H1 (cell line): ENCODE measurements at regions of chr12 and their contacts with region 1.

Region 1: DNA sequence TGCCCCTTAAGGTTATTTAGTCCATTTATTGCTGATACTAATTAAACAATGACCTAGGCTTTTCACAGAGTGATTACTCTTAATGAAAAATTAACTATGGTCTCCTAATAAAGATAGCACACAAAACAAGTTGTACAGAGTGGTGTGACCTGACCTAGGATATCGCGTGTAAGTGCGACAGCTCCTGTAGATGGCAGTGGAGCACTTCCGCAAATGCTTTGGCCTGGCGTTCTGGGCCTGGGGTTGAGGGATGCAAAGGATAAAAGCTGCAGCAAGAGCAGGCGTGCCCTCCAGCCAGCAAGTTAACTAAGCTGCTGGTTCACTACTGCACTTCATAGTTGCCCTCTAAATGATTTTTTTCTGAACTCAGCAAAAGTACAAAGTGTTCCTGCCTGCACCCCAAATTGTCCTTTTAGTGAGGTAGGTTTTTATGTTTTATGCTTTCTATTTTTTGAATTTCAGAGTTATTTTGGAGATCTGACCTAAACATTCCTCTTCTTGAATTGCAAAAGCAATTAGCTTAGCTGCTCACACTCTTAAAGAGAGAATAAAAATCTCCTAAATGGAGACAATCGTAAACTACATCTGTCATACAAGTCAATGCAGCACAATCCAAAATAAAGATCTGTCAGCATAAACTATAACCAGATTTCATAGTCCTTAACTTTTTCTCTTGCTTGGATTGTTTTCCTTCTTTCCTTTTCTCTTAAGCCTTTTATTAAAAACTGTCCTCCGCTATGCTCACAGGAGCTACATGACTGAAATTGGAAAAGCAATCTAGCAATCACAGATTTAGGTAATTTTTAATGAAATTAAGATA is 379.6 kb downstream of the LRIG3 start:
- DNase-seq: peak; percentile 75 to 78
- H3K4me3 ChIP-seq: no peak overlapping the region
- H3K27ac ChIP-seq: no peak overlapping the region
- H3K4me1 ChIP-seq: peaks cover 0 to 4% (median 1%) of the 10 kb centered on the region in 4 experiments; a peak in 3 of 7 replicates
- H3K27me3 ChIP-seq: no peaks in the 10 kb centered on the region
- CTCF ChIP-seq: peak; percentile 81 to 89 (median 86)
- EP300 ChIP-seq: no peak
- POLR2A ChIP-seq: no peak
- RAD21 ChIP-seq: peak; percentile 97

Region 2: DNA sequence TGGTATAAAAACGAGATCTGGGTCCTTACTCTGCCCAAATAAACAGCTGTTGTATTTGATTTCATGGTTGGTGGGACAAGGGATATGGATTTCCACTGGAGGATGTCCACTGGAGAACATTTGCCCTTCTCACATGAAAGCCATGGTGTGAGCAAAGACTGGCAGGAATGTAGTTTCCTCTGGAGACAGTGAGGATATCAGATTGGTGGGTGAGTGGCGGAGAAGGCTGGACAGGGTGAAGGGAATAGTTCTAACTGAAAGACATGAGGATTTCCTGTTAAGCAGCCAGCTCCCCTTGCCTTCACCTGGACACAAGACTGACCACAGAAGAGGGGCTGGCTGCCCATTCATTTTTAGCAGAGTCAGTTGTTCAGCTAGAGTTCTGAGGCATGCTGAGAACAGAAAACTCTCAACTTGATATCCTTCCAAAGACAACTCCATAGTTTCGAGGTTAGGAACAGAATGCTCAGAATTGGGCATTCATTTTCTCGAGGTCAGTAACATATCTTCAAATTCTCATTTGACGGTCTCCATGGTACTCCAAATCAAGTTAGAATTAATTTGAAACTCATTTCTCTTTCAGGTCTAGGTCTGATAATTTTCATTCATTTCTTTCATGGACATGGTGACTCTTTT is 13.9 kb after region 1 on chr12:
- CTCF ChIA-PET with region 1: interaction called, 12 read pairs
- POLR2A ChIA-PET with region 1: no interaction called
- DNase-seq: no peak
- H3K4me3 ChIP-seq: no peak overlapping the region
- H3K27ac ChIP-seq: no peak overlapping the region
- H3K4me1 ChIP-seq: no peaks in the 10 kb centered on the region
- H3K27me3 ChIP-seq: no peaks in the 10 kb centered on the region
- CTCF ChIP-seq: no peak
- EP300 ChIP-seq: no peak
- POLR2A ChIP-seq: no peak
- RAD21 ChIP-seq: no peak

Region 3: DNA sequence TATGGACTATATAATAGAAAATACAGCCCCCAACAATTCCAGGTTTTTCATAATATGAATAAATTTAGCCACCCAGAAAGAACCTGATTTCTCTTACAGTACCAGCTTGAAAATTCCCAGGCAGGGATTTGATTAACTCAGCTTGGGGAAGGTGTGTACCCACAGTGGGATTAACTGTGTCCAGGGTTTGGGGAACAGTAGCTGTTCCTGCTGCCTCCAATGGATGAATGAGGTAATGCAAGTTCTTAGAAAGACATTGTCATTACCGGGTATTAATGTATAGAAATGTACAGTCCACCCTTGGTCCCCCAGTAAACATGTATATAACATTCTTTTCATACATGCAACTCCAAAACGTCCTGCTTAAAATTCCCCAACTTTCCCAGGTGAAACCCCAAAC is 264.1 kb after region 1 on chr12:
- CTCF ChIA-PET with region 1: interaction called, 14 read pairs
- POLR2A ChIA-PET with region 1: no interaction called
- DNase-seq: no peak
- H3K4me3 ChIP-seq: no peak overlapping the region
- H3K27ac ChIP-seq: no peak overlapping the region
- H3K4me1 ChIP-seq: no peaks in the 10 kb centered on the region
- H3K27me3 ChIP-seq: no peaks in the 10 kb centered on the region
- CTCF ChIP-seq: peak; percentile 16 to 53 (median 28); a peak in 3 of 4 replicates
- EP300 ChIP-seq: no peak
- POLR2A ChIP-seq: no peak
- RAD21 ChIP-seq: peak; percentile 47 to 58

Region 4: GRCh38 chr12:58819985-58820384 is 279.3 kb after region 1 on chr12:
- CTCF ChIA-PET with region 1: interaction called, 11 read pairs
- POLR2A ChIA-PET with region 1: no interaction called
- DNase-seq: no peak
- H3K4me3 ChIP-seq: no peak overlapping the region
- H3K27ac ChIP-seq: no peak overlapping the region
- H3K4me1 ChIP-seq: no peaks in the 10 kb centered on the region
- H3K27me3 ChIP-seq: no peaks in the 10 kb centered on the region
- CTCF ChIP-seq: no peak
- EP300 ChIP-seq: no peak
- POLR2A ChIP-seq: no peak
- RAD21 ChIP-seq: no peak

Region 5: DNA sequence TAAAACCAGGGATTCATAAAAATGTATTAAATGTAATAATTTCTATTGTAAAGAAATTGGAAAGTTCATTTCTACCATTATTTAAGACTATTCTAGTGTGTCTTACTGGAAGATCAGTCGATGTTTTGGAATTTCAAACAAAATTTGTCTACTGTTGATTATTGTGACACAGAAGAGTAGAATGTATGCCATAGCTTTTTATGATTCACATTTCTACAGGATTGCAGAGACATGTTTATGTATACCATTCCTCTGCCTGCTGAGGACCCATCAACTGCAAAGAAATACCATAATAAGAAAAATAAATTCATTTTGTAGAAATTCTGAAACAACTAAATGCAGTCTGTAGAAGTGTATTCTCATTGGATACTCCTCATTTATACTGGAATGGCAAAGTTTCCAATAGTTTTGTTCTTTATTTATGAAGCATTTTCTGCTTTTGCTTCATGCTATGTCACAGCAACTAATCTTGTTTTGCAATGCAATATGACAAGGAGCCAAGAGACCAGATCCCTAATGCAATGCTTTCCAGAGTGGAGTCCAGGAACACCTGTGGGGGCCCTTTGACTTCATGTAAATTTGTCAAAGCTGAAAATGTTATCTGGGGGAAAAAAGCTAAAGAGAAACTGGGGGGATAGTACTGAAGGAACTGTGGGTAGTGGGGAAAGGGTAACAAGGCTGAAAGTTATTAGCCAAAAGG is 552.5 kb after region 1 on chr12:
- CTCF ChIA-PET with region 1: interaction called, 11 read pairs
- POLR2A ChIA-PET with region 1: no interaction called
- DNase-seq: no peak
- H3K4me3 ChIP-seq: no peak overlapping the region
- H3K27ac ChIP-seq: no peak overlapping the region
- H3K4me1 ChIP-seq: no peaks in the 10 kb centered on the region
- H3K27me3 ChIP-seq: peaks cover 0 to 1% (median 0%) of the 10 kb centered on the region in 4 experiments; a peak in 1 of 7 replicates
- CTCF ChIP-seq: no peak
- EP300 ChIP-seq: no peak
- POLR2A ChIP-seq: no peak
- RAD21 ChIP-seq: no peak

Region 6: DNA sequence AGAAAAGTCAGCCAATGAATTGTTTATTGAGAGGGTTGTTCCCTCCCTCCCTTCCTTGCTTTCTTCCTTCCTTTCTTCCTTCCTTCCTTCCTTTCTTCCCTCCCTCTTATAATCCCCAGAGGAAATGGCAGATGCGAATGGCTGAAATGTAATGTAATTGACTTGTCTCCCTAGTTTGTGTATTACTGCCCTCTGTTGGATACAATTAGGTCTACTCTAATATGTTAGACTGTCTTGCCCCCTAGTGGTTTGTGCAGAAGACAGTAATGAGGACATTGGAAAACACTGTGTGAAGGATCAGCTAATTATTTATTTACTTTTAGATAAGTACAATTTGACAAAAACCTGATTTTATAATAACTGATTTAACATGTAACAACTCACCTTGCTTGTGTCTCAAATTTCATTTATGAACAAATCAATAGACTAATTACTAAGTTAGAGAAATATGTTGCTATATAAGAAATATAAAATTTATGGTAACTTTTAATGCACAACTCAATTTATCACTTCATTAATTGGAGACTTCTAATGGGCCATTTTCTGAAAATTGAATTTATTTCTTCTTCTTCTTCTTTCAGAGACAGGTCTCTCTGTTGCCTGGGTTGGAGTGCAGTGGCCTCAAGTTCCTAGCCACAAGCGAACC is 609.4 kb after region 1 on chr12:
- CTCF ChIA-PET with region 1: interaction called, 44 read pairs
- POLR2A ChIA-PET with region 1: no interaction called
- DNase-seq: no peak
- H3K4me3 ChIP-seq: no peak overlapping the region
- H3K27ac ChIP-seq: no peak overlapping the region
- H3K4me1 ChIP-seq: no peaks in the 10 kb centered on the region
- H3K27me3 ChIP-seq: no peaks in the 10 kb centered on the region
- CTCF ChIP-seq: peak in 2 of 3 experiments; percentile 94 to 99; a peak in 3 of 4 replicates
- EP300 ChIP-seq: no peak
- POLR2A ChIP-seq: no peak
- RAD21 ChIP-seq: peak; percentile 96 to 97

Region 7: GRCh38 chr12:59164991-59165718 is 624.5 kb after region 1 on chr12:
- CTCF ChIA-PET with region 1: interaction called, 19 read pairs
- POLR2A ChIA-PET with region 1: no interaction called
- DNase-seq: no peak
- H3K4me3 ChIP-seq: no peak overlapping the region
- H3K27ac ChIP-seq: no peak overlapping the region
- H3K4me1 ChIP-seq: no peaks in the 10 kb centered on the region
- H3K27me3 ChIP-seq: no peaks in the 10 kb centered on the region
- CTCF ChIP-seq: peak in 1 of 3 experiments; percentile 26; a peak in 1 of 4 replicates
- EP300 ChIP-seq: no peak
- POLR2A ChIP-seq: no peak
- RAD21 ChIP-seq: peak in 1 of 2 experiments; percentile 40; a peak in 3 of 4 replicates